ENCODE measurements at regions of chr7 and their contacts with region 1.

Region 1: GRCh38 chr7:28921822-28922221 is 36.3 kb downstream of the TRIL start:
- DNase-seq: no peak
- H3K4me3 Mint-ChIP-seq: no peak overlapping the region
- H3K27ac Mint-ChIP-seq: no peak overlapping the region
- H3K4me1 Mint-ChIP-seq: peaks cover 13% of the 10 kb centered on the region
- H3K27me3 Mint-ChIP-seq: peaks cover 14% of the 10 kb centered on the region

Region 2: DNA sequence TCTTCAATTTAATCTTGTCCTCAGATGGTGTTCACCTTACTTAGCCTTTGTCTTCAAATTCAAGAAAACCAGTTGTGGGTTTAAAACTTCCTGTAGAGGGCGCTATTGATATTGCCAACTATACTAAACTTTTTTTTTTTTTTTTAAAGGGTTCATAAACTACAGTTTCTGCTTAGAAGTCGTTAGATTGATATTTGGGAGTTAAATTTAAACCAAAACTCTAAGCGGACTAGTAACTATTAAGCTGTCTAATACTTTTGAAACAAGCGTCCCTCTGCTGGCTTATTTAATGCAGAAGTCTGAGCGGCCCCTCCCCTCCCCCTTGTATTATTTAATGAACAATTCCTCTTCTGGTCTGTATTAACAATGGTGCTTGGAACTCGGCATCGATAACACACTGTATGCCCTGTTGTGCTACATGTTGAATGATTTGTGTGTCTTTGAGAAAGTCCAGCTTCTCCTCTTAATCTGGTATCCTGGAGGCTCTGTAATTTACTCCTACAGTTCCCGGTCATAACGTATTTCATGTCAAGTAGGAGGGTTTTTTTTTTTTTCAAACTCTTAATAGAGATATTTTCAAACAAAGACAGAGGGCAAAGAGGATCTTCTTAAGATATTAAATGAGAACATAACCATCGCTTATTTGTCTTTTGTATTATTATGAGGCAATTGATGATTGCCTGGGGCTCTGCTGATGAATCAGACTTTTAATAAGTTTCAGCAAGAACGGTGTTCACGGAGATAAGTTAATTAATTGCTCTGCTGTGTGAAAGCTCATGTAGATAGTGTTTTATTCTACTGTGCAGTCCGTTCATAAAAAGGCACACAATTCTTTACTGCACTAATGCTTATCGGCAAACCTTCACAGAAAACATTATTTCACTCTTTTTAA is 532.1 kb before region 1 on chr7:
- intact Hi-C with region 1: loop called (anchors 5 kb)
- DNase-seq: no peak
- H3K4me3 Mint-ChIP-seq: no peak overlapping the region
- H3K27ac Mint-ChIP-seq: no peak overlapping the region
- H3K4me1 Mint-ChIP-seq: no peaks in the 10 kb centered on the region
- H3K27me3 Mint-ChIP-seq: peaks cover 14% of the 10 kb centered on the region

Region 3: DNA sequence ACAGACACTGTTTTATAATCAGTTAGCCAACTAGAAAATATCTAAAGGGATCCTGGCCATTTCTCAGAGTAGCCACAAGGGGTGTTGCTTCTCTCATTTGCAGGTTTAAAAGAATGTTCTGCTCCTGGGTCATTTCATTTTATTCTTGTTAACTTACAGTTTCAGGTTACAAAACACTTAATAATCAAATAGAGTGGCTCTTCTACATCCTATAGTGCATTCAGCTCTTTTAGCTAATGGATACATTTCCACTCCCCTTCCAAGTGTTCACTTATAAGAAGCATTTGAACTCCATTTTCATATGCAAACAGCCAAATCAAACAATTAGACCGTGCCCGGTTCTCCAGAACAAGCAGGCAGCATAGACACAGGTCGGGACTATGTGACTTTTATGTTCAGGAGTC is 81.2 kb before region 1 on chr7:
- intact Hi-C with region 1: no loop called
- DNase-seq: no peak
- H3K4me3 Mint-ChIP-seq: no peak overlapping the region
- H3K27ac Mint-ChIP-seq: no peak overlapping the region
- H3K4me1 Mint-ChIP-seq: no peaks in the 10 kb centered on the region
- H3K27me3 Mint-ChIP-seq: peaks cover 5% of the 10 kb centered on the region

Region 4: GRCh38 chr7:28891192-28891872 is 30.5 kb before region 1 on chr7:
- intact Hi-C with region 1: no loop called
- DNase-seq: no peak
- H3K4me3 Mint-ChIP-seq: no peak overlapping the region
- H3K27ac Mint-ChIP-seq: no peak overlapping the region
- H3K4me1 Mint-ChIP-seq: no peaks in the 10 kb centered on the region
- H3K27me3 Mint-ChIP-seq: no peaks in the 10 kb centered on the region

Region 5: GRCh38 chr7:28955718-28956619 is 34.1 kb after region 1 on chr7:
- intact Hi-C with region 1: loop called (anchors 5 kb)
- DNase-seq: no peak
- H3K4me3 Mint-ChIP-seq: no peak overlapping the region
- H3K27ac Mint-ChIP-seq: no peak overlapping the region
- H3K4me1 Mint-ChIP-seq: no peaks in the 10 kb centered on the region
- H3K27me3 Mint-ChIP-seq: peaks cover 53% of the 10 kb centered on the region

Region 6: DNA sequence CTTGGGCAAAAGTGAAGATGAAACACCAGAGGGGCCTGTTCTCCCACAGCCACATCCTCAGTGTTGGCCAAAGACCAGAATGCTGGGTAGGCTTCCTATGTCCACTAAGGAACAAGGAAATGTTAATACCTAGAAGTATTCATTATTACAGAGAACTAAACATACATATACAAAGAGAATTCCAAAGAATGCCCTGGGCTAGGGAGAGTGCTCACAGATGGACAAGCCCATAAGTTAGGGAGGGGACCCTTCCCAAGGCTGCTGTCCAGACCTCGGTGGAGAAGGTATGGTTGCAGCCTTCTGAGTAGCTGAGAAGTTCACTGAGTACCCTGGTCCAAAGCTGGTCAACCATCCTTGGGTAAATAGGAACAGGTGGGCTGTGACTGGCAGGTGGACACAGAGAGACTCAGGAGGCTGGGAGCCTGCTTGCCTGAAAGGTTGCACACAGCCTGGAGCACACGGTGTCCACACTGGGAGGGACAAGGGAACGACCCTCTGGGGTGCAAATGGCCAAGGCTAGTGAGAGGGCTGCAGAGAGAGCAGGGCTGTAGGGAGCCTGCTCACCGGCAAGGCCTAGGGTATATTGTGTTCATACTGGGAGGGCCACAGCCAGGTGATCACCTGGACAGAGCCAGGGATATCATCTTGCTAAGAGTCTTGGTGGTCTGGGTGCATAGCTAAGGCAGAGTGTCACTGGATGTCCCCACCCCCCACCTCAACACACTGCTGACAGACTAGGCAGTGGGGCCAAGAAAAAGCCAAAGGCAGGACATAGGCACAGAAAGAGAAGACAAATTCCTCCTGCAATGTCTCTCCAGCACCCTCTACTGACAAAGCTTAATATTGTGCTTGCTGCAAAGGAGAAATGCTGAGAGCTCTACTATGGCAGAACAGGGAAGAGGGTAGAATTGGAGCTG is 184.2 kb after region 1 on chr7:
- intact Hi-C with region 1: loop called (anchors 1 kb)
- DNase-seq: peak; percentile 8
- H3K4me3 Mint-ChIP-seq: no peak overlapping the region
- H3K27ac Mint-ChIP-seq: no peak overlapping the region
- H3K4me1 Mint-ChIP-seq: peaks cover 7% of the 10 kb centered on the region
- H3K27me3 Mint-ChIP-seq: peaks cover 15% of the 10 kb centered on the region

Region 7: GRCh38 chr7:29194594-29195427 is 273.0 kb after region 1 on chr7 and contains the start of gene CHN2:
- intact Hi-C with region 1: loop called (anchors 5 kb)
- DNase-seq: peak; percentile 12
- H3K4me3 Mint-ChIP-seq: peak within 1 kb of the TSS; percentile 78
- H3K27ac Mint-ChIP-seq: no peak within 1 kb of the TSS
- H3K4me1 Mint-ChIP-seq: peaks cover 18% of the 10 kb centered on the region
- H3K27me3 Mint-ChIP-seq: peaks cover 66% of the 10 kb centered on the region
- total RNA-seq, gene CHN2: not detected in 2 replicates

Region 8: DNA sequence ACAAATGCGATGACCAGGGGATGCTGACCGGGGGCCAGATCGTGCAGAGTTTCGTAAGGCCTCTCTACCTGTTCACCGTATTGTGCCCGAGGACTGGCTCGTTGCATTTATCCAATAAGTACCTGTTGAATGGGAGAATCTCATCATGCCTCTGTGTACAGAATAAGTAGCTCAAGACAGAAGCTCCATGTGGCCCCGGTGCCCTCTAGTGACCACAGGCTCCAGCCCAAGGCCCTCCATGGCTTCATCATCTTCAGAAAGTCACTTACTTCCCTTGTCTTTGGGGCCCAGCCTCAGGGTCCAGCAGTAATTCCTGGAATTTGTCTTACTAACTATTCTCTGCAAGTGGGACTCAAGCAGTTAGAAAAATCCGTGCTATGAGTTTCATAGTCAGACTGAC is 423.8 kb after region 1 on chr7:
- intact Hi-C with region 1: loop called (anchors 1 kb)
- DNase-seq: no peak
- H3K4me3 Mint-ChIP-seq: no peak overlapping the region
- H3K27ac Mint-ChIP-seq: no peak overlapping the region
- H3K4me1 Mint-ChIP-seq: no peaks in the 10 kb centered on the region
- H3K27me3 Mint-ChIP-seq: peaks cover 17% of the 10 kb centered on the region

Measured in activated T-helper 1 cell treated with anti-CD3 and anti-CD28 coated beads, Interleukin-12 subunit alpha, Interleukin-12 subunit beta, Interleukin-2, Interleukin-4 antibody, amounts not matched to agents 30 ng/mL and 10 ng/mL and 1 ng/mL, durations not matched to agents 14 hours and 24 hours and 36 hours (primary cell).